CD14-positive monocyte (primary cell): ENCODE measurements at regions of chr2 and their contacts with region 1.

Region 1: DNA sequence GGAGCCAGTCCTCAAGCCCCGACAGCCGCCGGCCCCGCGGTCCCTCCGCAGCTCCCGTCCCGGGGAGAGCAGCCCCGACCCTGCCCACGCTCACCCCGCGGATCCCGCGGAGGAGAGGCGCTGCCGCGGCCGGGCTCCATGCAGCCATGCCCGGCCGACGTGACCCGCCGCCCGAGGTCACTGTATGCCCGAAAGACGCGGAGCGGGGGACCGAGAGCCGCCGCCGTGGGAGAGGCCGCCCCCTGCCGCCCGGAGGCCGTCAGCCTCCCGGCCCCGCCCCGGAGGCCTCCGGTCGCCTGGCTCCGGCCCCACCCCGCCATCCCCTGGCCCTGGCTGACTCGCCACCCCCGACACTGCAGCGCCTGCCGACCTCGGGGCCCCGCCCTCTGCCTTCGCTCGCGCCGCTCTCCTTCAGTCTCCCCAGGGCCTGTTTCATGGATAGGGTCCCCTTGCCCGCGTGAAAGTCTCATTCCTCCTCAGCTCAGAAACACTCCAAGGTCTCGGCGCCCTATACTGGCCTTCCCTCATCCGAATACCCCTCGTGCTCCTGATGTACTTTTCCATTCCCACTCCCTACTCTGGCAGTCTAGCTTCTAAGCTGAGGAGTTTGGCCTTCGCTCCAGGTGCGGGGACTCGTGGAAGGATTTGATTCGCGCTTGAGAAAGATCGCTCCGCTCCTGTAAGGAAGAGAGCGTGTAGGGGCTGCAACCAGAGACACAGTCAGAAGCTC is at the start of gene BOLA3:
- DNase-seq: peak; percentile 70 to 75 (median 72)
- H3K4me3 ChIP-seq: peak within 1 kb of the TSS; percentile 43 to 89 (median 61)
- H3K4me3 Mint-ChIP-seq: no peak within 1 kb of the TSS
- H3K27ac ChIP-seq: peak within 1 kb of the TSS in 1 of 2 donors; percentile 67
- H3K27ac Mint-ChIP-seq: no peak within 1 kb of the TSS
- H3K4me1 ChIP-seq: peaks cover 17 to 21% of the 10 kb centered on the region in 2 donors
- H3K4me1 Mint-ChIP-seq: no peaks in the 10 kb centered on the region
- H3K27me3 ChIP-seq: no peaks in the 10 kb centered on the region
- H3K27me3 Mint-ChIP-seq: peaks cover 0 to 2% (median 0%) of the 10 kb centered on the region in 3 donors
- CTCF ChIP-seq: peak; percentile 80
- polyA plus RNA-seq, gene BOLA3: 3.9 to 8.0 (median 7.7) TPM

Region 2: DNA sequence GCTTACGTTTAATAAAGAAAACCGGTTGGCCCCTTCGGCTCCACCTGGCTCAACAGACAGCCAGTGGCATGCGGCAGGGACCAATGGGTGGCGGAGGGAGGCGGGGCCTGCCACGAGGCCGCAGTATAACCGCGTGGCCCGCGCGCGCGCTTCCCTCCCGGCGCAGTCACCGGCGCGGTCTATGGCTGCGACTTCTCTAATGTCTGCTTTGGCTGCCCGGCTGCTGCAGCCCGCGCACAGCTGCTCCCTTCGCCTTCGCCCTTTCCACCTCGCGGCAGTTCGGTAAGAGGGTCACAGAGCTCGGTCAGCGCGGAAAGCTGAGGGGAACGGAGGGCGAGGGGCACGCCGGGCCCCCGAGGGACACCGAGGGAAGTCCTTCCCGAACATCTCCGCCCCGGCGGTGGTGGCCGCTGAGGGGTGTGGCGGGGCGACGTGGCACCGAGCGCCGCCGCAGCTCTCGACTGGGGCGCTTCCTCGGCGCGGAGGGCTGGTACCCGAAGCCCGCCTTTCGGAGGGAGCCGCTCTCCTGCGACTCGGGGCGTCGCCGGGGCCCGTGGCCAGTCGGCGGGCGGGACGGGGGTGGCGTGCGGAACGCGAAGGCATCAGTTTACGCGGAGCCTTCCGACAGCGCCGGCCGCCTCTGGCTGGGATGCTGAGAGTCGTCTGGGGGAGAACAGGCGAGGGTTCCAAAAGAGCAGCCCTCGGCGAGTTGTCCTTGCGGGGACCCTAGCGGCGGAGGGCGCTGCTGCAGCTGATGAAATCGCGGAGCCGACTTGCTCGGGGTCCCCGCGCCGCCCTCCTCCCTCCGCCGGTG is 50.8 kb after region 1 on chr2 and contains the start of gene MTHFD2:
- intact Hi-C with region 1: no loop called
- DNase-seq: peak; percentile 96 to 98 (median 96)
- H3K4me3 ChIP-seq: peak within 1 kb of the TSS; percentile 58 to 78 (median 71)
- H3K4me3 Mint-ChIP-seq: peak within 1 kb of the TSS; percentile 92 to 100
- H3K27ac ChIP-seq: peak within 1 kb of the TSS; percentile 86 to 94
- H3K27ac Mint-ChIP-seq: peak within 1 kb of the TSS; percentile 96 to 98 (median 97)
- H3K4me1 ChIP-seq: peaks cover 25 to 38% of the 10 kb centered on the region in 2 donors
- H3K4me1 Mint-ChIP-seq: peaks cover 36% of the 10 kb centered on the region
- H3K27me3 ChIP-seq: no peaks in the 10 kb centered on the region
- H3K27me3 Mint-ChIP-seq: peaks cover 0 to 5% (median 1%) of the 10 kb centered on the region in 3 donors
- CTCF ChIP-seq: peak; percentile 92
- polyA plus RNA-seq, gene MTHFD2: 24.1 to 39.4 (median 38.5) TPM

Region 3: DNA sequence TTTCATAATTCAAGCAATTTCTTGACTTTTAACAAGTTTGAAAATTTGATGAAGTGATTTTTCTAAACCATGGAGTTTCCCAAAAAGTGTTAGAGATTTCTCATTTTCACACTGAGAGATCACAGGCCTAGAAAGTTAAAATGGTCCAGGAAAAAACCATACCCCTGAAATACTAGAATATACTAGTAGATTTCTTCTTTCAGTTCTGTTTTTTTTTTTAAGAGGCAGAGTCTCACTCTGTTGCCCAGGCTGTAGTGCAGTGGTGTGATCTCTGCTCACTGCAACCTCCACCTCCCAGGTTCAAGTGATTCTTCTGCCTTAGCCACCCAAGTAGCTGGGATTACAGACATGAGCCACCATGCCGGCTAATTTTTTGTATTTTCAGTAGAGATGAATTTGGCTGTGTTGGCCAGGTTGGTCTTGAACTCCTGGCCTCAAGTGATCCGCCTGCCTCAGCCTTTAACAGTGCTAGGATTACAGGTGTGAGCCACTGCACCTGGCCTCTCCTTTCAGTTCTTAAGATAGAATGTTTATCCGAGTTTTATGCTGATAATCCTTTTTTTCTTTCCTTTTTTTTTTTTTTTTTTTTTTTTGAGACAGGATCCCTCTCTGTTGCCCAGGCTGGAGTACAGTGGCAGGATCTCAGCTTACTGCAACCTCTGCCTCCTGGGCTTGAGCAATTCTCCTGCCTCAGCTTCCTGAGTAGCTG is 65.0 kb after region 1 on chr2:
- intact Hi-C with region 1: loop called in 1 of 2 experiments (anchors 10 kb)
- DNase-seq: no peak
- H3K4me3 ChIP-seq: no peak overlapping the region
- H3K4me3 Mint-ChIP-seq: no peak overlapping the region
- H3K27ac ChIP-seq: no peak overlapping the region
- H3K27ac Mint-ChIP-seq: peak overlapping the region in 3 of 7 donors; percentile 18 to 61 (median 42)
- H3K4me1 ChIP-seq: no peaks in the 10 kb centered on the region
- H3K4me1 Mint-ChIP-seq: no peaks in the 10 kb centered on the region
- H3K27me3 ChIP-seq: no peaks in the 10 kb centered on the region
- H3K27me3 Mint-ChIP-seq: no peaks in the 10 kb centered on the region
- CTCF ChIP-seq: no peak